ENCODE measurements at regions of chr2 and their contacts with region 1.

Region 1: DNA sequence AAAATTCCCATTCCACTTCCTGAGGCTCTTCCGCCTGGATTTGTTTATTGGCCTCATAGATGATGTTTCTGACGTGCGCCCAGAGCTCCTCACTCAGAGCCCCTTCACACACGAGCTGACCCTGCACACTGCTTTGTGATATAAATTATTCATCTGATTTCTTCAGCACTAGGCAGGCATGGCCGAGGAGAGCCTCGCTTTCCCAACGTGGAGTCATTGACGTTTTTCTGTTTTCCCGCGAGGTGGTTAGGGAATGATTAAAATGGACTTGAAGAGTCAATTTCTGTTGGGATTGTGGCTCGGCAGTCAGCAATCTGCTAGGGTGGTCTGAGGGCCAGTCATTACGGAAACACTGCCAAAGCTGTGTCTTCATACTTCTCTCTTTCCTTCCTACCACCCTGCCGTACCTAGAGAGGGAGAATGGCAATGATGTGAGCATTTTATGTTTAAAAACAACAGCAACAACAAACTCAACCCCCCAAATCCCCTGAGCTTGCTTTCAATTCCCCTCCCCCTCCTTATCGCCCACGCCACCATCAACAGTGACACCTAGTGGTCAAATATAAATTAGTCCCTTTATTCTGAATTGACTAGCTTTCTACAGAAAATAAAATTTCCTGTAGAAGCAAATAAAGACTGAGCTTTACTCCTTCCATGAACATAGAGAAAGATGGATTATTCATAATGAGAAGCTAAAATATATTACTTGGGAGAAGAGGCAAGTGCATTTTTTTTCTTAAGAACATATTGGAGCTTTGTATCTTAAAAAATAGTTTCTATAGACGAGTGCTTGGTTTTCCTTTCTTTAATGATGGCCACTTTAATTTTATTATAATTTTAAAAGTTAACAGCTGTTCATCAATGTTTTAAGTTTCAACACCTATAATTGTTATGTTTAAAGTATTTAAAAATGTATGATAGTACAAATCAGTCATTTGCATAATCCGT is 285.1 kb downstream of the MTX2 start:
- DNase-seq: peak; percentile 83
- H3K4me3 ChIP-seq: peak overlapping the region; percentile 16 to 39
- H3K27ac ChIP-seq: peak overlapping the region; percentile 10 to 94; a peak in 3 of 4 replicates
- H3K4me1 ChIP-seq: peaks cover 8 to 22% of the 10 kb centered on the region in 2 experiments; a peak in 3 of 4 replicates
- H3K27me3 ChIP-seq: no peaks in the 10 kb centered on the region
- CTCF ChIP-seq: peak; percentile 79
- EP300 ChIP-seq: peak in 1 of 2 experiments; percentile 40; a peak in 1 of 4 replicates
- RAD21 ChIP-seq: peak; percentile 89

Region 2: GRCh38 chr2:176140513-176141317 is 413.7 kb before region 1 on chr2:
- CTCF ChIA-PET with region 1: interaction called, 107 read pairs
- POLR2A ChIA-PET with region 1: interaction called, 18 read pairs
- DNase-seq: peak; percentile 96
- H3K4me3 ChIP-seq: peak overlapping the region; percentile 61 to 79
- H3K27ac ChIP-seq: peak overlapping the region; percentile 58 to 63
- H3K4me1 ChIP-seq: peaks cover 5 to 27% of the 10 kb centered on the region in 2 experiments; a peak in 2 of 4 replicates
- H3K27me3 ChIP-seq: no peaks in the 10 kb centered on the region
- CTCF ChIP-seq: peak; percentile 87
- EP300 ChIP-seq: no peak
- RAD21 ChIP-seq: peak; percentile 80

Region 3: DNA sequence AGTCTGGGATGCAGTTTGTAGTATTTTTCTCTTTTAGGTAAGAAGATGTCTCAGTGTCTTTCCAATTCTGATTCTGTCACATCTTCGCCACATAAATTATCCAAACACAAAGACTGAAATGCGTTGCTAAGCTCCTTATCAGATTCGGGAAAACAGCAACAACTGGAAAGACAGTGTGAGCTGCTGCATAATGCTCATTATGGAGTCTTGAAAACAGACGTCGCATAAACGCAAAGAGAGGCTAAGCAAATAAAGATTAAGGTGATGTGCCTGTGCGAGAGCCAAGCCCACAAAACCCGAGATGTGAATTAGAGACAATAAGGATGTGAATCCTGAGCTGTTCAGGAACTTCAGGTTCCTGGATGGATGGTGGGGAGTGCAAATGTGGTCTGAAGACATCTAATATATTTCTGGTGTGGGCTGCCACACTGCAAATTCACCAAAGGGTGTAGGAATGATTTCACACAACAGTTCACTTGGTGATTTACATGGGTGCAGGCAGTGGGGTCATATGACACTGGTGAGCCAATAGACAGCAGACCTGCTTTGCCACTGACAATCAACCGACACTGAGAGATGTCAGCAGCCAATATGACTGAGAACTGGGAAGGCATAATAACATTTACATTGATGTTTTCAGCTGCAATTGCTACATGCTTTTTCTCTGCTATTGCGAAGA is 89.3 kb before region 1 on chr2:
- CTCF ChIA-PET with region 1: interaction called, 11 read pairs
- POLR2A ChIA-PET with region 1: no interaction called
- DNase-seq: peak; percentile 58
- H3K4me3 ChIP-seq: peak overlapping the region in 1 of 2 experiments; percentile 4; a peak in 1 of 4 replicates
- H3K27ac ChIP-seq: peak overlapping the region in 1 of 2 experiments; percentile 88; a peak in 2 of 4 replicates
- H3K4me1 ChIP-seq: peaks cover 9 to 15% of the 10 kb centered on the region in 2 experiments; a peak in 3 of 4 replicates
- H3K27me3 ChIP-seq: no peaks in the 10 kb centered on the region
- CTCF ChIP-seq: no peak
- EP300 ChIP-seq: no peak
- RAD21 ChIP-seq: no peak

Region 4: GRCh38 chr2:176565641-176566323 is 11.4 kb after region 1 on chr2:
- CTCF ChIA-PET with region 1: interaction called, 55 read pairs
- POLR2A ChIA-PET with region 1: no interaction called
- DNase-seq: no peak
- H3K4me3 ChIP-seq: no peak overlapping the region
- H3K27ac ChIP-seq: no peak overlapping the region
- H3K4me1 ChIP-seq: peaks cover 3 to 18% of the 10 kb centered on the region in 2 experiments; a peak in 2 of 4 replicates
- H3K27me3 ChIP-seq: no peaks in the 10 kb centered on the region
- CTCF ChIP-seq: no peak
- EP300 ChIP-seq: no peak
- RAD21 ChIP-seq: no peak

Region 5: GRCh38 chr2:176638167-176639015 is 84.0 kb after region 1 on chr2:
- CTCF ChIA-PET with region 1: interaction called, 40 read pairs
- POLR2A ChIA-PET with region 1: interaction called, 13 read pairs
- DNase-seq: peak; percentile 89
- H3K4me3 ChIP-seq: peak overlapping the region; percentile 75 to 82
- H3K27ac ChIP-seq: peak overlapping the region; percentile 73 to 96
- H3K4me1 ChIP-seq: peaks cover 26 to 28% of the 10 kb centered on the region in 2 experiments; a peak in 3 of 4 replicates
- H3K27me3 ChIP-seq: no peaks in the 10 kb centered on the region
- CTCF ChIP-seq: peak; percentile 91
- EP300 ChIP-seq: peak in 1 of 2 experiments; percentile 74; a peak in 1 of 4 replicates
- RAD21 ChIP-seq: peak; percentile 81

Region 6: DNA sequence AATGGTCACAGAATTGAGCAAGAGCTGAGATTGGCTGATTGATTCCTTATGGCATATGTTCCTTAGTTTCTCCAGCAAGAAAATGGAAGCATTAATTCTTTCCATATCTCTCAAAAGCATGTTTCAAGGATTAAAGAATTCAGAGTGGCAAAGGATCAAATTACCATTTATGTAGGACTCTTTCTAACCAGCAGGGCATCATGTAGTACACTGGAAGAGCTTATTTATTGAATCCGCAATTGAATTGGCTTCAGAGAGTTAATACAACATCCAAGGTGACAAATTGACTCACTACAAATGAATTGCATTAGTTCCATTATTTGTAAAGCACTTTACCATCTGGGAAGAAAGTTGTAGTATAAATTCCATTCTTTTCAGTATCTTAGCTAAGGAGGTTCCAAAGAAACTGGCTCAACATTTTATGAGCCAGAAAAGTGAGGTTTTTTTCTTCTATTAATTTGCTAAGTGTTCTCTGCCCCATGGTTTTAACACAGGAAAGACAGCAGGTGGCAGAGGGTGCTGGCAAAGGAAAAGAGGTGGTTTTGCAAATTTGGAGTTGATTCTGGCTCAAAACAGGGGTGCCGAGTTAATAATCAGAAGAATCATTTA is 124.8 kb after region 1 on chr2:
- CTCF ChIA-PET with region 1: no interaction called
- POLR2A ChIA-PET with region 1: no interaction called
- DNase-seq: no peak
- H3K4me3 ChIP-seq: no peak overlapping the region
- H3K27ac ChIP-seq: no peak overlapping the region
- H3K4me1 ChIP-seq: peaks cover 0 to 44% of the 10 kb centered on the region in 2 experiments; a peak in 3 of 4 replicates
- H3K27me3 ChIP-seq: no peaks in the 10 kb centered on the region
- CTCF ChIP-seq: no peak
- EP300 ChIP-seq: no peak
- RAD21 ChIP-seq: no peak

Measured in SK-N-SH (cell line).